ENCODE measurements at regions of chr15 and their contacts with region 1.

Region 1: DNA sequence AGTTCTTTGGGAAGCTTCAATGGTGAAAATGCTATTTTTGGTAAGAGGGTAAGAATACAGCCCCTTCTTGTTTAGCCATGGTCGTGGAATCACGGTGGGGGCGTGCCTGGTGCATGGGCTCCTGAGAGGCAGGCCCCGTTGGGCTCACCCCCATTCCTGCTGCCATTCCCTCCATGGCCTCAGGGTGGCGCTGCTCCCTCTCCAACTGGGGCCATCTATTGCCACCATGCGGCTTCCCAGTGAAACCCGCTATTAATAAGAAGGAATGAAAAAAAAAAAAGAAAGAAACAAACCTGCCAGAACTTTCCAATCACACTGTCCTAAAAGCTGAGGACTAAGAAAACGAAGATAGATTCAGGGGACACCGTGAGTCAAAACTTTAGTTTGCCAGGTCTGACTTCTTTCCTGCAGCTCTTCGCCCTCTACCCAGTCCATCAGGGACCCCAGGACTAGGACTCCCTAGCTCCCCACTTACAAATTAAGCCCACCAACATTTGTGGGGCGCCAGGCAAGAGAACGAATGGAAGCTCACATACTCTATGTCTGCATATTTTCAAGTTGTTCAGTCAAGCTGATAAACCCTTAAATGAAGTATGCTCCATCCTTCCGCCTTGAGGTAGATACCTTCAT is 30.6 kb upstream of the ABHD2 start:
- DNase-seq: peak; percentile 72 to 96 (median 86)

Region 2: GRCh38 chr15:87967953-87968352 is 1089.7 kb before region 1 on chr15:
- intact Hi-C with region 1: no loop called
- DNase-seq: no peak

Region 3: DNA sequence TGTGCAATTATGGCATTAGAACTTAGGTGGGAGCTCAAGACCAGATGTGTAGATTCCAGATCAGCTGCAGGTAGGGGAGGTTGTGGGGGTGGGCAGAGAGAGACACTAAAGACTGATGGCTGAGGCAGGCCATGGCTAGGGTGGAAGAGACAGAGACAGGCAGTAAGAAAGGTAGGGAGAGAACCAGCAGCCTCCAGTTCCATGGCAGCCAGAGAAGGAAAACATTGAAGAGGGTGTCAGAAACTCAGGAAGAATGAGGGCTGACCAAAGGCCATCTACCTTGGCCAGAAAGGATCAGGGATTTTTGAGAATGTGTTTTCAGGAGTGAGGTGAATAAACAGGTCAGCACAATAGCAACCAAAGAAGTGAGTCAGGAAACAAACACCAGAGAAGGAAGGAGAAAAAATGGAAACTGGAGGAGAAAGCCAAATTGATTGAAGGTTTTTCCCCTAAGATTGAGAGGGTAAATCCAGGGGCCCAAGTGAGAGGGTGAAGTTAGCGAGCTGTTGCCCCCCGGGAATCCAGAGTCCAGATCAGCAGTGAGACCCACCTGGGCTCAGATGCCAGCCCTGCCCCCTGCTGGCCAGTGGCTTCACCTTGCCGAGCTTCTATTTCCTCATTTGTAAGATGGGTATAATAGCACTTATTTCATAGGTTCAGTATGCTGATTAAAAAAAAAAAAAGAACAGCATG is 71.7 kb after region 1 on chr15:
- intact Hi-C with region 1: loop called (anchors 2 kb)
- DNase-seq: peak in 7 of 10 donors; percentile 40 to 90 (median 63)

Region 4: GRCh38 chr15:89171136-89172072 is 113.8 kb after region 1 on chr15:
- intact Hi-C with region 1: loop called (anchors 1 kb)
- DNase-seq: peak in 7 of 10 donors; percentile 27 to 88 (median 52)

Region 5: GRCh38 chr15:89177633-89178306 is 120.2 kb after region 1 on chr15:
- intact Hi-C with region 1: loop called (anchors 2 kb)
- DNase-seq: peak in 8 of 10 donors; percentile 59 to 93 (median 75)